ENCODE measurements at regions of chr4 and their contacts with region 1.

Region 1: GRCh38 chr4:88320780-88321373 is 36.5 kb upstream of the PPM1K start:
- DNase-seq: peak in 19 of 35 experiments; percentile 2 to 41 (median 7)
- ATAC-seq: peak; percentile 86 to 89 (median 88)
- H3K4me3 ChIP-seq: peak overlapping the region in 1 of 2 donors; percentile 28
- H3K4me3 Mint-ChIP-seq: peak overlapping the region; percentile 66 to 77 (median 73)
- H3K27ac ChIP-seq: peak overlapping the region; percentile 73
- H3K27ac Mint-ChIP-seq: peak overlapping the region; percentile 97 to 98
- H3K4me1 ChIP-seq: peaks cover 5 to 10% of the 10 kb centered on the region in 2 experiments
- H3K4me1 Mint-ChIP-seq: peaks cover 19 to 26% (median 22%) of the 10 kb centered on the region in 3 donors
- H3K27me3 ChIP-seq: peaks cover 0 to 2% of the 10 kb centered on the region in 2 experiments
- H3K27me3 Mint-ChIP-seq: no peaks in the 10 kb centered on the region

Region 2: DNA sequence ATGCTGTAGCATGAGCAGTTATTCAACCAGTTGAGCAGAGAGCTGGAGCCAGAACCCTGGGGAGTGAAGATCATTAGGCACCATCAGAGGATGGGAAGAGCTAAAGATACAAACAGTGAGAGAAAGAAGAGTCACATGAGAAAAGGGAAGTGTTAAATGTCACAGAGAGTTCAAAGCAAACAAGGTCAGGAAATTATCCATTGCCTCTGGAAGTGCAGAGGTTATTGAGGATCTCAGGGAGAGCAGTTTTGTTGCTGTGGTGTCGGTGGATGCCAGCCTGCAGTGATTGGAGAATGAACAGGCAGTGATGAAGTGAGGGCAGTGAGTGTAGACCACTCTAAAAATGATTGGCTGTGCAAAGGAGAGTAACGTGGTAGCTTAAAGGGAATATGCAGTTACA is 809.4 kb before region 1 on chr4:
- CTCF ChIA-PET with region 1: no interaction called
- POLR2A ChIA-PET with region 1: interaction called in 1 of 2 experiments, 10 read pairs
- DNase-seq: no peak
- ATAC-seq: no peak
- H3K4me3 ChIP-seq: no peak overlapping the region
- H3K4me3 Mint-ChIP-seq: no peak overlapping the region
- H3K27ac ChIP-seq: no peak overlapping the region
- H3K27ac Mint-ChIP-seq: no peak overlapping the region
- H3K4me1 ChIP-seq: no peaks in the 10 kb centered on the region
- H3K4me1 Mint-ChIP-seq: no peaks in the 10 kb centered on the region
- H3K27me3 ChIP-seq: no peaks in the 10 kb centered on the region
- H3K27me3 Mint-ChIP-seq: peaks cover 0 to 1% of the 10 kb centered on the region in 2 donors

Region 3: GRCh38 chr4:88291003-88291402 is 29.9 kb before region 1 on chr4:
- CTCF ChIA-PET with region 1: no interaction called
- POLR2A ChIA-PET with region 1: no interaction called
- DNase-seq: no peak
- ATAC-seq: no peak
- H3K4me3 ChIP-seq: no peak overlapping the region
- H3K4me3 Mint-ChIP-seq: no peak overlapping the region
- H3K27ac ChIP-seq: no peak overlapping the region
- H3K27ac Mint-ChIP-seq: no peak overlapping the region
- H3K4me1 ChIP-seq: no peaks in the 10 kb centered on the region
- H3K4me1 Mint-ChIP-seq: peaks cover 0 to 5% (median 1%) of the 10 kb centered on the region in 3 donors
- H3K27me3 ChIP-seq: no peaks in the 10 kb centered on the region
- H3K27me3 Mint-ChIP-seq: no peaks in the 10 kb centered on the region

Region 4: GRCh38 chr4:88341227-88342192 is 20.6 kb after region 1 on chr4:
- CTCF ChIA-PET with region 1: no interaction called
- POLR2A ChIA-PET with region 1: interaction called in 1 of 2 experiments, 10 read pairs
- DNase-seq: no peak
- ATAC-seq: no peak
- H3K4me3 ChIP-seq: no peak overlapping the region
- H3K4me3 Mint-ChIP-seq: no peak overlapping the region
- H3K27ac ChIP-seq: no peak overlapping the region
- H3K27ac Mint-ChIP-seq: no peak overlapping the region
- H3K4me1 ChIP-seq: no peaks in the 10 kb centered on the region
- H3K4me1 Mint-ChIP-seq: no peaks in the 10 kb centered on the region
- H3K27me3 ChIP-seq: no peaks in the 10 kb centered on the region
- H3K27me3 Mint-ChIP-seq: no peaks in the 10 kb centered on the region

Region 5: DNA sequence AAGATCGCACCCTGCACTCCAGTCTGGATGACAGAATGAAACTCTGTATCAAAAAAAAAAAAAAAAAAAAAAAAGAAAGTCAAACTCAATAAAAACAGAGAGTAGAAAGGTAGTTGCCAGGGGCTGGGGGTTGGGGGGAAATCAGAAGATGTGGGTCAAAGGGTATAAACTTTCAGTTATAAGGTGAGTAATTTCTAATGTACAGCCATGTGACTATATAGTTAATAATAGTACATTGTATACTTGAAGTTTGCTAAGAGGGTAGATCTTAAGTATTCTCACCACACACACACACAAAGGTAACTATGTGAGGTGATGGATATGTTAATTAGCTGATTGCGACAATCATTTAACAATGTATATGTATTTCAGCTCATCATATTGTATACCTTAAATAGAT is 69.3 kb after region 1 on chr4:
- CTCF ChIA-PET with region 1: no interaction called
- POLR2A ChIA-PET with region 1: no interaction called
- DNase-seq: no peak
- ATAC-seq: no peak
- H3K4me3 ChIP-seq: no peak overlapping the region
- H3K4me3 Mint-ChIP-seq: no peak overlapping the region
- H3K27ac ChIP-seq: no peak overlapping the region
- H3K27ac Mint-ChIP-seq: no peak overlapping the region
- H3K4me1 ChIP-seq: no peaks in the 10 kb centered on the region
- H3K4me1 Mint-ChIP-seq: peaks cover 0 to 7% (median 5%) of the 10 kb centered on the region in 3 donors
- H3K27me3 ChIP-seq: no peaks in the 10 kb centered on the region
- H3K27me3 Mint-ChIP-seq: no peaks in the 10 kb centered on the region

Measured in T-cell (primary cell).